ENCODE measurements at regions of chr16 and their contacts with region 1.

Region 1: GRCh38 chr16:84952335-84953189 is 58.8 kb downstream of the ZDHHC7 start:
- DNase-seq: peak; percentile 86

Region 2: DNA sequence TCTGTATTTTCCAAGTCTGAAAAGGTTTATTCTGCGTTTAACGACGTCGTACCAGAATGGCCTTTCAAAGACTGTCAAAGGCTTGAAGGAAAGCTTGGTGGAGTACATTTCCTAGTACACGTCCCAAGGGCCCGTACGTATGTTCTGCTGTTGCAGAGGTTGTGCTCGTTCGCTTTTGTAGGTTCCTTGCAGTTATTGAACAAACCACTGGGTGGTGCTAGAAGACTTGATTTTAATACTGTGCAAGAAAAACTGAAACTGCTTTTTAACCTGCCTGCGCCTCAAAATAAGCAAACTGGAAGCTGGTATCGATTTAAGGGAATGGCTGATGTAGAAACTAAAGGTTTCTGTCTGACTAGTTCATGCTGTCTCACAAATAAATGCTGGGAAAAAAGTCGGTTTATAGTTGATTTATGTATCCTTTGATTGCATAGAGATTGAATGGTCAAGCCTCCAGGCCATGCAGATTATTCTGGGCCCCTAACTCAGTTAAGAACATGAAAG is 198.2 kb before region 1 on chr16:
- intact Hi-C with region 1: loop called (anchors 5 kb)
- DNase-seq: no peak

Region 3: DNA sequence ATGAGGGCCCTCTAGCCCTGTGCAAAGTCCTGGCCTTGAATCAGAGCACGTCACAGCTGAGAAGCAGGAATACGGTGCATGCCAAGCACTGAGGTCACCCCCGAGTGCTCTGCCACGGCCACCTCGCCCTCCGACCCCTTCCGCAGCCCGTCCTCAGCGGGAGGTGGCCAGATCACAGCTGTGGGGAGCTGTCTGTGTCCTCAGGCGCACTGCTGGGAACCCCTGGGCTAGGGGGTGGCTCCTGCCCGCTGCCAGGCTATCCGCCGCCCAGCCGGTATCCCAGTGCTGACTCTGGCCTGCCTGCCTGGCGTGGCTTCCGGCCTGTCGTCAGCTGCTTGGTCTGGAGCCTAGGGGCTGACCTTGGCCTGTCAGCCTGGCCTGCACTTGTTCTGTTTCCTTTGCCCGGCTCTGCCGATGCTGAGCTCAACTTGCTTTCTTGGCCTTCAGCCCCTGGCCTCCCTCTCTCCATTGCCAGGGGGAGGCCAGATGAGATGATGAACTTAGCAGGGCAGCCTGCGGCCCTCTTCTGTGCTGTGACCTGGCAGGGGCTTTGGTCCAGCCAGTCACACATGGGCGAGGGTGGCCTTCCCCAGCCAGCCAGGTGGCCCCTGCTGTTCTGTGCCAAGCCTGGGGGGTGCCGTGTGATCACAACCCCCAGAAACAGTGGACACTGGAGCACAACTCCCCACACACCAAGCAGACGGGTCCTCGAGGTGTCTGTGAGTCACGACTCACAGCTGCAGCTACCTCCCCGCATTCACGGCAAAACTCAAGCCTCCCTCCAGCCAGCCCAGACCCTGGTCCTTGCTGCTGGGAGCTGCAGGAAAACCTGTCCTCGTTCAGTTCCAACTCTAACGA is 18.6 kb before region 1 on chr16:
- intact Hi-C with region 1: loop called (anchors 2 kb)
- DNase-seq: peak; percentile 89

Region 4: GRCh38 chr16:85969159-85969558 is 1016.6 kb after region 1 on chr16:
- intact Hi-C with region 1: no loop called
- DNase-seq: no peak